Heart right ventricle (tissue), 16 donors: ENCODE measurements at regions of chr1 and their contacts with region 1.

Region 1: DNA sequence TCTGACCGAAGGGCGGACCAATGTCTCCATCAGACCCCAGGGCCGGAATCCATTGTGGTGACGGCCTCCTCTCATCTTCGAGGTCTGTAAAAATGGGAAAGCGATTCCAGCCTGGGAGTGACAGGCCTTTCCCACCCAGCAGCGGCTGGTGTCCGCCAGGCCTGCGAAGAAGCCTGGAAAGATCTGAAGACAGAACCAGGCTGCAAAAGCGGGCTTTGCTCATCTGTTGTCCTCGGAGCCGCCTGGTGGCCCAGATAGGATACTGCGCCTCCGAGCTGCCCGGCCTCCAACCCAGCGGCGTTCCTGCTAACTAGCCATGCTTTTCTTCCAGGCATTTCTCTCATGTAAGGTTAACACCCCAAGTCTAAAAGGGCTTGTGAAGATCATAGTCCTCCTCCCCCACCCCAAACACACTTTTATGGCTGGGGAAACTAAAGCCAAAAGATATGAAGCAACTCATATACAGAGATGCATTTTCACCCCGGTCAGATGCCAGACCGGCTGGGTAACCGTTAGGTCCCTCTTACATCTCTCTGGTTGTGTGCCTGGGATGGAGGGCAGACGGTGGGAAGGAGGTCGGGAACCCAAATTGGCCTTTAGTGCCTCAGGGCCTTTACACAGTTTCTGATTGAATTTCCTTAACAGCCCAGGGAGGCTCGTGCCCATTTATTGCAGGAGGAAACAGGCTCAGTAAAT is 1.9 kb upstream of the DHRS3 start:
- DNase-seq: peak; percentile 87 to 90
- ATAC-seq: peak; percentile 48 to 75 (median 61)
- H3K4me3 ChIP-seq: peak overlapping the region in 9 of 10 donors; percentile 55 to 91 (median 80)
- H3K27ac ChIP-seq: peak overlapping the region; percentile 92 to 98 (median 96)
- H3K4me1 ChIP-seq: peaks cover 9 to 65% (median 58%) of the 10 kb centered on the region in 9 donors
- H3K27me3 ChIP-seq: peaks cover 0 to 9% (median 0%) of the 10 kb centered on the region in 7 donors
- CTCF ChIP-seq: peak; percentile 94 to 97 (median 96)

Region 2: DNA sequence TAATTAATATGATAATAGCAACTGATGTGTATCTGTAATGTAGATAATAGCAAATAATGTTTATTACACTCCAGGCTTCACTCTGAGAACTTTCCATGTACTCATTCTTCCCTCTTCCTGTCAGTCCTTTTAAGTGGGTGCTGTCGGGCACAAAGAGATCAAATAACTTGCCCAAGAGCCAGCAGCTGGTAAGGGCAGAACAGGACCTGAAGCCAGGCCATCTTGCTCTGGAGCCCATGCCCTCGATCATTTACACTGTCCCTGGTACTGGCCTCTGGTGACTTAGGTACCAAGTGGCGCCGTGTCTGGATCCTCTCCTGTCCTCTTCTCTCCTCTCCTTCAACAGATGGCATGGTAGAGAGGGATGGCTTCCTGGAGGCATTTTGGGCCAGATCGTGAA is 293.0 kb before region 1 on chr1:
- intact Hi-C with region 1: loop called in 1 of 10 experiments (anchors 10 kb)
- DNase-seq: no peak
- ATAC-seq: peak in 5 of 8 donors; percentile 39 to 86 (median 80)
- H3K4me3 ChIP-seq: no peak overlapping the region
- H3K27ac ChIP-seq: no peak overlapping the region
- H3K4me1 ChIP-seq: peaks cover 0 to 7% (median 0%) of the 10 kb centered on the region in 9 donors
- H3K27me3 ChIP-seq: no peaks in the 10 kb centered on the region
- CTCF ChIP-seq: no peak

Region 3: DNA sequence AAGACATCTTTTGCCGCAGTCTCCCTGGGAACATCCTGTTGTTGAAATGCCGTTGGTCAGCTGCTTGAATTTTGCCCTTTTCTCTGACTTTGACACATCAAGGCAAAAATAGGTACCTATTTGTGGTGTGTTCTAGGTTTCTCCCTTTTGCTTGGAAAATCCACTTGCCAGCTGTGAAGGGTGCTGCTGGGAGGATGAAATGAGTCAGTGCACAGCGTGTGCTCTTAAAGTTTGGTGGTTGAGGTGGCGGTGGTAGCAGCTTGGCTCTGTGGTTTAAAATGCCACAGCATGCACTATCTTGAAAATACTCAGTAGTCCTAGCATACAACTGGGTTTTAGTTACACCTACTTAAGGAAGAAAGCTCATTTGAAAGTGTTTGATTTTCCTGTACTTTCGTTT is 185.8 kb before region 1 on chr1:
- intact Hi-C with region 1: loop called in 2 of 10 experiments (anchors 5 kb)
- DNase-seq: no peak
- ATAC-seq: peak; percentile 10 to 63 (median 42)
- H3K4me3 ChIP-seq: no peak overlapping the region
- H3K27ac ChIP-seq: peak overlapping the region; percentile 1 to 88 (median 78)
- H3K4me1 ChIP-seq: peaks cover 12 to 92% (median 62%) of the 10 kb centered on the region in 9 donors
- H3K27me3 ChIP-seq: no peaks in the 10 kb centered on the region
- CTCF ChIP-seq: no peak

Region 4: GRCh38 chr1:12496154-12496913 is 123.6 kb before region 1 on chr1:
- intact Hi-C with region 1: loop called in 1 of 10 experiments (anchors 5 kb)
- DNase-seq: no peak
- ATAC-seq: peak; percentile 44 to 88 (median 76)
- H3K4me3 ChIP-seq: no peak overlapping the region
- H3K27ac ChIP-seq: peak overlapping the region in 9 of 10 donors; percentile 46 to 83 (median 68)
- H3K4me1 ChIP-seq: peaks cover 8 to 31% (median 26%) of the 10 kb centered on the region in 9 donors
- H3K27me3 ChIP-seq: no peaks in the 10 kb centered on the region
- CTCF ChIP-seq: no peak

Region 5: GRCh38 chr1:12596007-12596821 is 23.7 kb before region 1 on chr1:
- intact Hi-C with region 1: loop called in 3 of 10 experiments (anchors 2 kb)
- DNase-seq: peak; percentile 83 to 89
- ATAC-seq: peak; percentile 61 to 82 (median 72)
- H3K4me3 ChIP-seq: peak overlapping the region in 9 of 10 donors; percentile 14 to 46 (median 39)
- H3K27ac ChIP-seq: peak overlapping the region; percentile 72 to 95 (median 91)
- H3K4me1 ChIP-seq: peaks cover 70 to 100% (median 94%) of the 10 kb centered on the region in 9 donors
- H3K27me3 ChIP-seq: peaks cover 0 to 4% (median 0%) of the 10 kb centered on the region in 7 donors
- CTCF ChIP-seq: no peak